AG04450 (cell line): ENCODE measurements at regions of chr6 and their contacts with region 1.

Region 1: DNA sequence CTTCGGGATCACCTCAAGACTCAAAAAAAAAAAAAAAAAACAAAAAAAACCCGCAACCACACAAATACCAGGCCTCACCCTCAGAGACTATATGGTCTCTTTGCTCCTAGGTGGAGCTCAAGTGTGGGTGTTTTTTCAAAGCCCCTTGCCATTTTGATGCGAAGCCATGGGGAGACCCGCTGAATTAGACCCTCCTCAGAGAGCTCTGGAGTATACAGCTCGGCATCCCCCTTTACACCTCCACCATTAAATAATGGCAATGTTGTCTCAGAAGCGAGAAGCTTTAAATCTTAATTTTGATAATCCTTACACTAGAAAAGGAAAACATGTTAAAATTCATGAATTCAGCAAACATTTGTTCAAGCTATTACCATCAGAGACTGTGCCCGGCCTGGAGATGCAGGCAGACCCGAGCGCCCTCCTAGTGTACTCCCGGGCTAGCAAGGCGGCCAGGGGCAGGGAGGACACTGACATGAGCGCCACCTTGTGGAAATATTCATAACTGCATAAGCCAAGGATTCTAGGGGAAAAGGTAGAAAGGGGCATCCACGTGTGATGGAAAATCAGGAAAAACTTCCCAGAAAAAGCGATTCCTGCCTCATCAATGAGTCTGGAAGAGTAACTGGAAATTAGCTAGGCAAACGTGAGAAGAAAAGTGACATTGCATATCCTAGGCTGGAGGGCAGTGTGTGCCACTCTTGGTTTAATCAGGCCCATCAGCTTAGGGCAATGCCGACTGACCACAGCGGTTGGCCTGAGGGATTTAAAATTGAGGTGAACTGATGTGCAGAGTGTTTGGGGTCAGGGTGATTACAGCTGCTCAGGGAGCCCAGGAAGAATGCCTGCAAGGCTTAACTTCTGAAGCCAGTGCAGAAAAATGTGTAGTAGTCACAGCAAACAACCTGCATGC is 72.5 kb downstream of the B3GAT2 start:
- DNase-seq: peak; percentile 1
- H3K4me3 ChIP-seq: no peak overlapping the region
- H3K27ac ChIP-seq: no peak overlapping the region
- H3K27me3 ChIP-seq: peaks cover 6% of the 10 kb centered on the region
- CTCF ChIP-seq: peak; percentile 91

Region 2: GRCh38 chr6:70520575-70520974 is 363.8 kb before region 1 on chr6:
- CTCF ChIA-PET with region 1: interaction called, 14 read pairs
- POLR2A ChIA-PET with region 1: no interaction called
- DNase-seq: no peak
- H3K4me3 ChIP-seq: no peak overlapping the region
- H3K27ac ChIP-seq: no peak overlapping the region
- H3K27me3 ChIP-seq: no peaks in the 10 kb centered on the region
- CTCF ChIP-seq: peak; percentile 43

Region 3: GRCh38 chr6:70700922-70701876 is 183.1 kb before region 1 on chr6:
- CTCF ChIA-PET with region 1: interaction called, 69 read pairs
- POLR2A ChIA-PET with region 1: no interaction called
- DNase-seq: no peak
- H3K4me3 ChIP-seq: no peak overlapping the region
- H3K27ac ChIP-seq: no peak overlapping the region
- H3K27me3 ChIP-seq: no peaks in the 10 kb centered on the region
- CTCF ChIP-seq: no peak

Region 4: DNA sequence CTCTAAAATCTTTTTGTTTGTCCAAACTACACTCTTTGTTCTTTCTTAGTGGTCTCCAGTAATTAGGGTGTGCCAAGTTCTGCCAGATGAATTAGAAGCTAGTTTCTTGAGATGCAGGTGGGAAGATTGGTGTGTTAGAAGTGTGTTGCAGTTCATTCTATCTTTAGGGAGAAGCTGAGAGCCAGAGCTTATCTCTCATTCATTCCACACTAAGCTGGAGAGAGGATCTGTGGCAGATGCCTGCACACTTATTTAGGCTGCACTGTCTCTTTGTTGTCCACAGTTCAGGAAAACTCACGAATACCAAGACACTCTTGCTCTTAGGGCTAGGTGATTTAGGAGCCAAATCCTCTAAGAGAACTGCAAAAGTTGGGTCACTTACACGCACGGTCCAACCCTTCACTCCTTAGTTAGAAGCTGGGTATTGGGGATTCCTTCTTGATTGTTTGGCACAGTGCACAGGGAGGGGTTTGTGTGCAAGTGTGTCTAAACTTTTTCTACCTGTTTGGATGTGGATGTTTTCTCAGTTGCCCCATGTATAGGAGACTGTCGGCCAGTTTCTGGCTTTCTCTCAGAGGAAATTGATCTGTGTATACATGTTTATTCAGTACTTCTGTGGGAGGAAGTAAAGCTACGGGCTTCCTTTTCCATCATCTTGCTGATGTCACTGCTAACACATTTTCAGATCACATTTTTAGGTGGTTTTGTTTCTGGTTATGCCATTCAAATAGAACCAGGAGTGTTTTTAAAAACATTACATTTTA is 167.1 kb before region 1 on chr6:
- CTCF ChIA-PET with region 1: interaction called, 270 read pairs
- POLR2A ChIA-PET with region 1: no interaction called
- DNase-seq: no peak
- H3K4me3 ChIP-seq: no peak overlapping the region
- H3K27ac ChIP-seq: no peak overlapping the region
- H3K27me3 ChIP-seq: no peaks in the 10 kb centered on the region
- CTCF ChIP-seq: no peak

Region 5: DNA sequence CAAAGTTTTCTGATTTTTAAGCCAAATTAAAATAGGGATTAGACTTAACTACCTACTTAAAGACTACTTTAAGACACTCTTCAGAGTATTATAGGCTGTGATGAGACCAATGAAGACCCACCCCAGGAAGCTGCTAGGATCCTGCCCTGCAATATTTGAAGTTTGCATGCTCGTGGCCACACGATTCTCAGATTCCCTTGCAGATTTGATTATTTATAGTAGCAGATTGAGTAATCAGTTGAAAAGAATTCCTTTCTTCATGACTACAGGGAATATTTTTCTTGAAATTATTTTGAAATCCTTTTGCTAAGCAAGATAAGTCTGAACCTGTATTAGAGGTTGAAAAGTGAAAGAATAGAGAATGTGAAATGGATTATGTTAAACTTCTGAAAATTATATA is 49.8 kb before region 1 on chr6:
- CTCF ChIA-PET with region 1: interaction called, 11 read pairs
- POLR2A ChIA-PET with region 1: no interaction called
- DNase-seq: peak; percentile 21
- H3K4me3 ChIP-seq: no peak overlapping the region
- H3K27ac ChIP-seq: no peak overlapping the region
- H3K27me3 ChIP-seq: no peaks in the 10 kb centered on the region
- CTCF ChIP-seq: no peak

Region 6: GRCh38 chr6:70863343-70863742 is 21.0 kb before region 1 on chr6:
- CTCF ChIA-PET with region 1: interaction called, 26 read pairs
- POLR2A ChIA-PET with region 1: no interaction called
- DNase-seq: no peak
- H3K4me3 ChIP-seq: no peak overlapping the region
- H3K27ac ChIP-seq: no peak overlapping the region
- H3K27me3 ChIP-seq: no peaks in the 10 kb centered on the region
- CTCF ChIP-seq: no peak